ENCODE measurements at regions of chr7 and their contacts with region 1.

Region 1: GRCh38 chr7:103412151-103412550 is 33.9 kb downstream of the SLC26A5 start:
- DNase-seq: no peak
- ATAC-seq: no peak
- H3K4me3 ChIP-seq: no peak overlapping the region
- H3K4me3 Mint-ChIP-seq: no peak overlapping the region
- H3K27ac ChIP-seq: no peak overlapping the region
- H3K27ac Mint-ChIP-seq: no peak overlapping the region
- H3K4me1 ChIP-seq: no peaks in the 10 kb centered on the region
- H3K4me1 Mint-ChIP-seq: no peaks in the 10 kb centered on the region
- H3K27me3 ChIP-seq: no peaks in the 10 kb centered on the region
- H3K27me3 Mint-ChIP-seq: peaks cover 44% of the 10 kb centered on the region
- CTCF ChIP-seq: no peak

Region 2: GRCh38 chr7:102978280-102978679 is 433.9 kb before region 1 on chr7:
- CTCF ChIA-PET with region 1: no interaction called
- POLR2A ChIA-PET with region 1: no interaction called
- intact Hi-C with region 1: no loop called
- DNase-seq: no peak
- ATAC-seq: no peak
- H3K4me3 ChIP-seq: no peak overlapping the region
- H3K4me3 Mint-ChIP-seq: no peak overlapping the region
- H3K27ac ChIP-seq: no peak overlapping the region
- H3K27ac Mint-ChIP-seq: no peak overlapping the region
- H3K4me1 ChIP-seq: no peaks in the 10 kb centered on the region
- H3K4me1 Mint-ChIP-seq: no peaks in the 10 kb centered on the region
- H3K27me3 ChIP-seq: no peaks in the 10 kb centered on the region
- H3K27me3 Mint-ChIP-seq: no peaks in the 10 kb centered on the region
- CTCF ChIP-seq: no peak

Region 3: GRCh38 chr7:103113164-103113563 is 299.0 kb before region 1 on chr7:
- CTCF ChIA-PET with region 1: no interaction called
- POLR2A ChIA-PET with region 1: no interaction called
- intact Hi-C with region 1: no loop called
- DNase-seq: no peak
- ATAC-seq: no peak
- H3K4me3 ChIP-seq: no peak overlapping the region
- H3K4me3 Mint-ChIP-seq: no peak overlapping the region
- H3K27ac ChIP-seq: no peak overlapping the region
- H3K27ac Mint-ChIP-seq: no peak overlapping the region
- H3K4me1 ChIP-seq: no peaks in the 10 kb centered on the region
- H3K4me1 Mint-ChIP-seq: peaks cover 2% of the 10 kb centered on the region
- H3K27me3 ChIP-seq: no peaks in the 10 kb centered on the region
- H3K27me3 Mint-ChIP-seq: no peaks in the 10 kb centered on the region
- CTCF ChIP-seq: no peak

Region 4: GRCh38 chr7:103296901-103297836 is 115.0 kb before region 1 on chr7 and contains the start of gene PMPCB:
- CTCF ChIA-PET with region 1: no interaction called
- POLR2A ChIA-PET with region 1: no interaction called
- intact Hi-C with region 1: loop called (anchors 1 kb)
- DNase-seq: peak; percentile 95
- ATAC-seq: peak; percentile 100
- H3K4me3 ChIP-seq: peak within 1 kb of the TSS; percentile 79 to 98 (median 88)
- H3K4me3 Mint-ChIP-seq: peak within 1 kb of the TSS; percentile 90
- H3K27ac ChIP-seq: peak within 1 kb of the TSS; percentile 86 to 94
- H3K27ac Mint-ChIP-seq: peak within 1 kb of the TSS; percentile 91
- H3K4me1 ChIP-seq: peaks cover 17 to 19% of the 10 kb centered on the region in 2 donors
- H3K4me1 Mint-ChIP-seq: peaks cover 22% of the 10 kb centered on the region
- H3K27me3 ChIP-seq: no peaks in the 10 kb centered on the region
- H3K27me3 Mint-ChIP-seq: peaks cover 3% of the 10 kb centered on the region
- CTCF ChIP-seq: peak; percentile 85
- total RNA-seq, gene PMPCB: 70.9 and 72.8 TPM in 2 replicates

Region 5: DNA sequence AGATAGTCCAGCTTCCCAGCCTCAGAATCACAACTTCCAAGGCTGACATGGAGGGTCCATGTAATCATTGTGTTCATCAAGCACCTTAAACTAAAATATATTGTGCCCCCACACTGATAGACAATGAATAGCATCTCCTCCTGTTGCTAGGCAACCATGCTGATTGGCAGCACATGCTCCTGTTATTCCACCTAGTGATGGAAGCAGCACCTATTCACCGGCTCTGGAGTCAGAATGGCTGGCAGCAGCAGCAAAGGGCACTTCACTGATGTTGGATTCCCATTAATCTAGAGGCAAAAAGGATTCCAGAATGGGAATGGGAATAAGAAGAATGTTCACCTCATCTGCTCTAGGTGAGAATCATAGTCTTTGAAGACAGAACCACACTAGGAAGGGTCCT is 522.4 kb after region 1 on chr7:
- CTCF ChIA-PET with region 1: no interaction called
- POLR2A ChIA-PET with region 1: no interaction called
- intact Hi-C with region 1: no loop called
- DNase-seq: no peak
- ATAC-seq: no peak
- H3K4me3 ChIP-seq: no peak overlapping the region
- H3K4me3 Mint-ChIP-seq: no peak overlapping the region
- H3K27ac ChIP-seq: no peak overlapping the region
- H3K27ac Mint-ChIP-seq: no peak overlapping the region
- H3K4me1 ChIP-seq: no peaks in the 10 kb centered on the region
- H3K4me1 Mint-ChIP-seq: no peaks in the 10 kb centered on the region
- H3K27me3 ChIP-seq: no peaks in the 10 kb centered on the region
- H3K27me3 Mint-ChIP-seq: peaks cover 4% of the 10 kb centered on the region
- CTCF ChIP-seq: no peak

Measured in B cell (primary cell).